SK-N-SH (cell line): ENCODE measurements at regions of chr7 and their contacts with region 1.

Region 1: DNA sequence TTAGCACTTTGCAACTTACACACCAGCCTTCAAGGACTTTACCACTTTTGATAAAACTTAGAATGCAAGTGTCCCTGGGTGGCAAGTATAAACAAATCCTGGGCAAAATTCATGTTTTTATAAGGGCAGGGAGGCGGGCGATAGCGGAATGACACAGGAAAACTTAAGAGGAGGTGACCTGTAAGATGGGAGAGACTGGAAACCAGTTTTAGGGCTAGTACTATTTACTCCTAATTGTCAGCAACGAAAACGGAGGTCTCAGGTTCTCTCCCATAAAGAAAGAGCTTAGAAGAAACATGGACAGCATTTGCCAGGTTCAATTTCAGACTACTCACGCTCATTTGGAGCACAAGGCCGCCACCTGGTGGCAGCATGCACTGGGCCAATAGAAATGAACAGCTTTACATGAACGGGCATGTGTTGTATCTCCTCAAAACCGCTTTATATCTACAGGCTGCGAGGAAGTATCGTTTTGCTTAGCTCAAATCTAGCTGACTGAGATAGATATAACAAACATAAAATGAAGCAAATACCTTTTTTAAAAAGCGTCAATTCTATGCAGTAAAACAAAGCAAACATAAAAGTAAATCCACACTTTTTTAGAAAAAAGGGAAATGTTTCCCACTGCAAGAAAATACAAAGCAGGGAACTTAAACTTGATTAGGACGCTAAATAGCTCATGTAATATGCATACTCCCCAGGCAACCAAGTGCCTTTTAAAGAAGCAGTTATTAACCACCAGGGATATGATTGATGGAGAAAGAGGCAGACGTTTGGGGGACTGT is 37.6 kb upstream of the SVOPL start:
- DNase-seq: peak; percentile 83
- H3K4me3 ChIP-seq: no peak overlapping the region; a peak in 1 of 4 replicates
- H3K27ac ChIP-seq: no peak overlapping the region; a peak in 1 of 4 replicates
- H3K4me1 ChIP-seq: peaks cover 0 to 5% of the 10 kb centered on the region in 2 experiments; a peak in 2 of 4 replicates
- H3K27me3 ChIP-seq: no peaks in the 10 kb centered on the region
- CTCF ChIP-seq: peak; percentile 99
- EP300 ChIP-seq: no peak
- RAD21 ChIP-seq: peak; percentile 100

Region 2: DNA sequence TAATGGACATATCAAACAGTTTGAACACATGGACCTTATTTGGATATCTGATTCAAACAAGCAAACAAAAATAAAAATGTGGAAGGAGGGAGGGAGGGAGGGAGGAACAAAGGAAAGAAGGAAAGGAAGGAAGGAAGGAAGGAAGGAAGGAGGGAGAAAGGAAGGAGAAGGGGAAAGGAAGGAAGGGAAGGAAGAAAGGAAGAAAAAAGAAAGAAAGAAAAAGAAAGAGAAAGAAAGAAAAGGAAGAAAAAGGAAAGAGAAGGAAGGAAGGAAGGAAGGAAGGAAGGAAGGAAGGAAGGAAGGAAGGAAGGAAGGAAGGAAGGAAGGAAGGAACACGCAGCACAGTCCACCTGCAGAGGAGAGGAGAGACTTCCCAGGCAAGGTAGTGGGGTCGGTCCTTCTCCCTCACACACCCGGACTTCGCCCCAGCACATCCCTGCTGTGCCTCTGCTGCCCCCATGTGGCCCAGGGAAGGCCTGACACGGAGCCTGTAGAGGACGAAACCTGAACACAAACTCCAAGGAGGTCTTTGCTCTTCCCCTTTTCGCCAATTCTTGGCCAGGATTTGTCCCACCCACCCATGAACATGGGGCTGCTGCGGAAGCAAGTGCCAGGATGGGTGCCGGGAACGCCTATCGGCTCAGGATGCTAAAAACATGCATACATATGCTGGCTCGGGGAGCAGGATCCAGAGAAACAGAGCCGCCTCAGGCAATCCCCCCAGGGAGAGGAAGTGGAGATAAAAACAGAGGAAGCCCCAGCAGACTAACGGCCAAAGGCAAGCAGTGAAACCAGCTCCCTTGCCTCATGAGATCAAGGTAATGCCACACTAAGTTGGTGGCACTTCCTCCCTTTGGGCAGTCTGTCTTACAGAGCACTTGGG is 839.7 kb before region 1 on chr7:
- CTCF ChIA-PET with region 1: interaction called, 47 read pairs
- POLR2A ChIA-PET with region 1: interaction called, 3 read pairs
- DNase-seq: peak; percentile 89
- H3K4me3 ChIP-seq: no peak overlapping the region; a peak in 1 of 4 replicates
- H3K27ac ChIP-seq: peak overlapping the region; percentile 17 to 36; a peak in 3 of 4 replicates
- H3K4me1 ChIP-seq: peaks cover 0 to 8% of the 10 kb centered on the region in 2 experiments; a peak in 1 of 4 replicates
- H3K27me3 ChIP-seq: no peaks in the 10 kb centered on the region
- CTCF ChIP-seq: peak; percentile 99
- EP300 ChIP-seq: no peak
- RAD21 ChIP-seq: peak; percentile 98

Region 3: GRCh38 chr7:138142583-138143201 is 596.1 kb before region 1 on chr7:
- CTCF ChIA-PET with region 1: interaction called, 15 read pairs
- POLR2A ChIA-PET with region 1: no interaction called
- DNase-seq: peak; percentile 65
- H3K4me3 ChIP-seq: no peak overlapping the region
- H3K27ac ChIP-seq: peak overlapping the region; percentile 28 to 79; a peak in 3 of 4 replicates
- H3K4me1 ChIP-seq: peaks cover 0 to 7% of the 10 kb centered on the region in 2 experiments; a peak in 2 of 4 replicates
- H3K27me3 ChIP-seq: no peaks in the 10 kb centered on the region
- CTCF ChIP-seq: no peak
- EP300 ChIP-seq: peak in 1 of 2 experiments; percentile 89; a peak in 2 of 4 replicates
- RAD21 ChIP-seq: peak; percentile 12; the same call in 1 of the 2 replicates

Region 4: DNA sequence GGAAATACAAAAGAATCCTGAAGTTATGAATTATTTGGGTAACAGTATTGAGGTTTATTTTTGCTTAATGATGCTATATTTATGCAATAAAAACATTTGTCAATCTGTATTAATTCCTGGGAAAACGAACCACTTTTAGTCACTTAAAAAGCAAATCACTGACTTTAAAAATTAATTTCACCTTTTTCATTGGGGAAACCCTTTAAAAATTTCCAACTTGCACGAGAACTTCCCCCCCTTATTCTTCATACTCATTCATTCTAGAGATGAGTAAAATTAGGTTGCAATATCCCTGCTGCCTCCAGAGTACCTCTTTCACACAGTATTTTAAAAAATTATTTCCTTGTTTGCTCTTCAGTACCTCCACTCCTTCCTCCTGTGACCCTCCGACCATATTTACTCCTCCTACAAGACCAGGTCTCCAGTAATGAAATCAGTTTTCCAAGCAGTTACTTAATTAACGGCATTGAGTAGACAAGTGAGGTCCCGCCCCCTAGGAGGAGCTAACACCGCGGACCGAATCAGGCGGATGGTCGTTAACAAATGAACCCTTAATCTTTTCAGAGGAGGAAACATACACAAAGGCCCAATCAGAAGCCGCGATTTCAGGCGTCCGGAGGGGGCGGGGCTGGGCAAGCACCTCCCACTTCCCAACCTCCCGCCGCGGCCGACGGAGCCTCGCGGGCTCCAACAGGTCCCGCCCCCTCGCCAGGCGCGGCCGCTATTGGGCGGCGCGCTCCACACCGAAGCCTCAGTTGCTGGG is 279.1 kb before region 1 on chr7:
- CTCF ChIA-PET with region 1: interaction called, 17 read pairs
- POLR2A ChIA-PET with region 1: no interaction called
- DNase-seq: no peak
- H3K4me3 ChIP-seq: peak overlapping the region; percentile 54 to 68
- H3K27ac ChIP-seq: peak overlapping the region; percentile 1 to 86; a peak in 3 of 4 replicates
- H3K4me1 ChIP-seq: peaks cover 3 to 4% of the 10 kb centered on the region in 2 experiments; a peak in 2 of 4 replicates
- H3K27me3 ChIP-seq: no peaks in the 10 kb centered on the region
- CTCF ChIP-seq: peak; percentile 51
- EP300 ChIP-seq: peak in 1 of 2 experiments; percentile 65; a peak in 2 of 4 replicates
- RAD21 ChIP-seq: peak; percentile 41

Region 5: GRCh38 chr7:138661236-138661635 is 77.5 kb before region 1 on chr7:
- CTCF ChIA-PET with region 1: interaction called, 12 read pairs
- POLR2A ChIA-PET with region 1: no interaction called
- DNase-seq: no peak
- H3K4me3 ChIP-seq: no peak overlapping the region
- H3K27ac ChIP-seq: peak overlapping the region in 1 of 2 experiments; percentile 94; a peak in 2 of 4 replicates
- H3K4me1 ChIP-seq: peaks cover 0 to 50% of the 10 kb centered on the region in 2 experiments; a peak in 2 of 4 replicates
- H3K27me3 ChIP-seq: no peaks in the 10 kb centered on the region
- CTCF ChIP-seq: no peak
- EP300 ChIP-seq: no peak
- RAD21 ChIP-seq: no peak

Region 6: GRCh38 chr7:138768241-138768640 is 29.5 kb after region 1 on chr7:
- CTCF ChIA-PET with region 1: interaction called, 12 read pairs
- POLR2A ChIA-PET with region 1: interaction called, 3 read pairs
- DNase-seq: no peak
- H3K4me3 ChIP-seq: no peak overlapping the region
- H3K27ac ChIP-seq: no peak overlapping the region
- H3K4me1 ChIP-seq: no peaks in the 10 kb centered on the region
- H3K27me3 ChIP-seq: no peaks in the 10 kb centered on the region
- CTCF ChIP-seq: no peak
- EP300 ChIP-seq: no peak
- RAD21 ChIP-seq: no peak